Lower leg skin (tissue), 4 donors: ENCODE measurements at regions of chr14 and their contacts with region 1.

Region 1: DNA sequence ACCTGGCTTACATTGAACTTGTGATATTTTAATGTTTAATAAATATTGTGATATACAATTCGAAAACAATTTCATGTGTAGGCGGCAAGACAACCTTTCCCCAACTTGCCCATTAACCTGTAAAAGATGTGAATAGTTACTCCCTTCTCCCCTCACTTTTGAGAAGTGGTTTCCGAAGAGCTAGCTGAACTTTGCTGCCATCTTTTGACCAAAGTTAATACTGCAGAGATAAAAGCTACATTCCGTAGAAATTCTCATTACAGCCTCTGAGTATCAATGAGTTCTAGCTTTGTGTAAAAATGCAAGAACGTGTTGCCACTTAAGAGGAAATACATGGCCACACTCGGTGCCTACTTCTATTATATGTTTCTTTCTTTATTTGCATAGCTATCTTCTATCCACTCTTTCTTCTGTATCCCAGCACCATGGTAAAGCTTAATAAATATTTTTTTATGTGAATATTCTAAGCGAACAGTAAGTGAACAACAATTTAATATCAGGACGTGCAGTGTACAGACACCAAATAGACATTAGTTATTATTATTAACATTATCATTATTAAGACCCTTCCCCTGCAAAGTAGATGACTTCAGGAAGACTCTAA is 105.1 kb upstream of the TMEM260 start:
- DNase-seq: no peak
- H3K4me3 ChIP-seq: no peak overlapping the region
- CTCF ChIP-seq: no peak
- POLR2A ChIP-seq: no peak

Region 2: DNA sequence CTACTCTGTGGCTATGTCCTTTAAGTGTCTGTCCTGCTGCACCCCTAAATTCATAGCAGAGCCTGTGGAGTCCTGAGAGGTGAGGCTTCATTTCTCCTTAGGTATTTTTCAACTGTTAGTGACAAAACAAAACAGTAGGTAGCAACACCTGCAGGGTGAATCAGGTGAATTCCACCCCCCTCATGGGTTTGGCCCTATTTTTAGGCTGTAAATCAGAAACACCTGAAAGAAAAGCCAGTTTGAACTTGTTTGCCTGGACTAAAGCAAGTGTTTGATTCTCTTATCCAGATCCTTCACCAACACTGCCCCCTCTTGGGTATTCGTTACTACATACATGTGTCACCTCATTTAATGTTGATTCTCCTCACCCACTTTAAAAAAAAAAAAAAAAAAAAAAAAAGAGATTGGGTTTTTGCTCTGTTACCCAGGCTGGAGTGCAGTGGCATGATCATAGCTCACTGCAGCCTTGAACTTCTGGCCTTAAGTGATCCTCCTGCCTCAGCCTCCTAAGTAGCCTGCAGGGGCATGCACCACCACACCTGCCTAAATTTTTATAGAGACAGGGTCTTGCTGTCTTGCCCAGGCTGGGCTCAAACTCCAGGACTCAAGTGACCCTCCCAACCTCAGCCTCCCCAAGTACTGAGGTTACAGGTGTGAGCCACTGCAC is 1044.4 kb before region 1 on chr14:
- intact Hi-C with region 1: loop called (anchors 10 kb)
- DNase-seq: peak in 1 of 2 donors; percentile 62
- H3K4me3 ChIP-seq: no peak overlapping the region
- CTCF ChIP-seq: no peak
- POLR2A ChIP-seq: no peak

Region 3: DNA sequence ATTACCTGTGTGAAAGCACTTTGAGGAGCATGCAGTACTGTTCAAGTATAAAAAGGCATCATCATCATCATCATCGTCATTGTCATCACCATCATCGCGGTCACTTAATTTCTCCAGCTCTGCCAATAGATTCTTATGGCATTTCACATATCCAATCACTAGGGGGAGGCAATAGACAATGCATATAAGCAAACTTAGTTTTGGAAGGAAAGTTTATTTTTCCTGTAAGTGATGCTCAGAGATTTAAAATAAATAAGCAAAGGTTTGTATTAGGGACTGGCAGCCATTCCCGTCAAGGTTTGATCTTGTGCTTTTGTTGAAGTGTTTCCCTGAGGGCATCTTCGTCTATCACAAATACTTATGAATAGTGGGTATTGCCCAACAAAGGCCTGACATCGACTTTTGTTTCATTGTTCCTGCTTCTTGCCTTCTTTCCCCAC is 767.1 kb before region 1 on chr14:
- intact Hi-C with region 1: loop called (anchors 10 kb)
- DNase-seq: no peak
- H3K4me3 ChIP-seq: no peak overlapping the region
- CTCF ChIP-seq: peak in 1 of 3 donors; percentile 23
- POLR2A ChIP-seq: no peak

Region 4: DNA sequence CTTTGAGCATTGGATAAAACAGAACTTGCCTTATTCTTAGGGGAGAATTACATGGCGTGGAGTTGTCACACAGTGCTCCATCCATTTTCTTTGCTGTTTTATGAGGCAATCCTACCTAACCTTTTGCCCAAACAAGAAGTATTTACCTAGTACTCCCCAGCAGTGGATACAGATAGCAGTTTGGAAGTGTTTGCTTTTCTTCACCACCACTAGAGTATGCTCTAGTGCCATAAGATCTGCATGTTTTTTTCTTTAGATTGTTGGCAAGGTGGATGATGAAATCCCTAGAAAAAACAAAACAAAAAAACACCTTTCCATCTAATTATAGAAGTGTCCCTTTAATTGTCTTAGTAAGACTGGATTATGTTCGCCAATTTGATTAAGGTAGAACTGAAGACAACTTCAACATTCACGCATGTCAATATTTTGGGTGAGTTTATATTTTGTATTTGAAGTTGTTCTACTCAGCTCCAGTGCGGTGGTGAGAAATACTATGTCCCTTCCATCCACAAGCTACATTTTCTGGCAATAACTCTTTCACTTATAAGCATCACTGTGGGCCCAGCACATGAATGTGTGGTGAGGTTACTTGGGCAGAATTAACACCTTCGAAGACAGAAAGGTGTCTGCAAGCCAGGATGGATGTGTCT is 81.5 kb after region 1 on chr14:
- intact Hi-C with region 1: no loop called
- DNase-seq: no peak
- H3K4me3 ChIP-seq: no peak overlapping the region
- CTCF ChIP-seq: no peak
- POLR2A ChIP-seq: no peak

Region 5: DNA sequence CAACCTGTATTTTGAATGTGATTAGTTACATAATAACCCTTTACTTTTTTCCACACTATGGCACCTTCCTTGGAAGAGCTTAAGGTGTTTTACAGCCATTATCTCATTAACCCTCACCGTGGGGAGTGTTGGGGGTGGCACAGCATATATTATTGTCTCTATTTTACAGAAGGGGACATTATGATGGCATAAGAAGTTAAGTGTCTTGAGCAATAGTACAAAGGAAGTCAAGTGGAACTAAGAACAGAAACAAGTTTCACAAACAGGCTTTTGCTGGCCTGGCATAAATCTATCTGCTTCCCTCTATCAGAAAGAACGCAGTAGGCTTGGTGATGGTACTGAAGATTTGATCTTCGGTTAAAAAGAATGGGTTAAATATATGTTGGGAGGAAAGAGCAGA is 505.4 kb after region 1 on chr14:
- intact Hi-C with region 1: no loop called
- DNase-seq: no peak
- H3K4me3 ChIP-seq: no peak overlapping the region
- CTCF ChIP-seq: no peak
- POLR2A ChIP-seq: no peak